Sciatic nerve (tissue), 2 donors: ENCODE measurements at regions of chr18 and their contacts with region 1.

Region 1: DNA sequence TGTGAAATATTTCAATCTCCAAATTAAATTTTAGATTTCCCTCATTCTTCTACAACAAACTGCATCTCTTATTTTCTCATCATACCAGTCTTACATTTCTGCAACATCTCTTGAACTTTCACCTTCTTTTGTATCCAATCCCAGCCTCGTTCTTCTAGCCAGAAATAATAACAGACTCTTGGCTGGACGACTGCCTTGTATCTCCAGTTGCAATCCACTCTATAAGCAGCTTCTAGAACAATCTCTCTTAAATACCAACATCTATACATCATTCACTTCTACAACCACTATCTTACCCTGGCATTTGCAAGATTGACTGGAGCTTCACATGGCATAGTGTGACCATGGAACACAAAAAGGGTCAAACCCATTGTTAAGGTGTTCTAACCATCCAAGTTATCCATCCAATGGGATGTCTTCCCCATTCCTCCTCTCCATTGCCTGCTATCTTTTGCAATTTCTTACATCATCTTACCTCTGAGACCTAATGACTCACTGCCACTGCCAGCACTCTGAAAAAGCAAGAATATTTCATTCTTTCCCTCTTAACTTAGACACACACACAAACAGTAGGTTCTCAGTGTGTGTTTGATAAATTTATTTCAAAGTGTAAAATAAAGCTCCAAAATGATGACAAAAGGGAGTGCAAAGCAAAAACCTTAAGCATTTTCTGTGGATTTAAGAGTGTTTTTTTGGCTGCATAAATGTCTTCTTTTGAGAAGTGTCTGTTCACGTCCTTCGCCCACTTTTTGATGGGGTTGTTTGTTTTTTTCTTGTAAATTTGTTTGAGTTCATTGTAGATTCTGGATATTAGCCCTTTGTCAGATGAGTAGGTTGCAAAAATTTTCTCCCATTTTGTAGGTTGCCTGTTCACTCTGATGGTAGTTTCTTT is 145.6 kb downstream of the METTL4 start:
- DNase-seq: no peak
- ATAC-seq: no peak

Region 2: GRCh38 chr18:1865869-1866268 is 559.8 kb before region 1 on chr18:
- intact Hi-C with region 1: loop called (anchors 10 kb)
- DNase-seq: no peak
- ATAC-seq: no peak